H1 (cell line): ENCODE measurements at regions of chr3 and their contacts with region 1.

Region 1: DNA sequence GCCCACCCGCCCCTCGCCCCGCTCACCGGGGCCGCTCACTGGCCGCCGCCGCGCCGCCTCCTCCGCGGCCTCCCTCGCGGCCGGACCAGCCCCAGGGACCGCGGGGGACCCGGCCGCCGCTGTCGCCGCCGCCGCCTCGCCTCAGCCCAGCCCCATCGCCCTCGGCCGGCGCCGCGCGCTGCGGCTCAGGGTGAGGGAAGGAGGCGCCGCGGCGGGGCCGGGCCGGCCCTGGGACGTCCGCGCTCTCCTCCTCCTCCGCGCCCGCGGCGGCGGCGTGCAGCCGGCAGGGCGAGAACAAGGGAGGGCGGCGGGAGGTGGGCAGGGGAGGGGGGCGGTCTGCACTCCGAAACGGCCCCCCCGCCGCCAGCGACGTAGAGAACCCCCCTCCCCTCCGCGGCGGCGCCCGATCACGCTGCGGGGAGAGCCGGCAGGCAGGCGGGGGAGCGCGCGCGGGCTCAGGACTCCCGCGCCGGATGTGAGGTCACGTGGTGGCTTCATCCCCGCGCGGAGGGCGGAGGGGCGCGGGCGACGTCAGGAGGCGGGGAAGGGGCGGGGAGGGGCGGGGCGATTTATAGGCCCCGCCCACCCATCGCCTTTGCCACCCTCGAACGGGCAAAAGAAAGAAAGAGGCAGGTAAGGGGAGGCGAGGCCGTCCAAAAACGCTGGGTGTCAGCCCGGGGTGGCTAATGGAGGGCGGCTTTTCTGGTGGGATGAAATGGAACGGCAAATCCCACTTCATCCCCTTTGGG is at the start of gene ATP13A3:
- DNase-seq: peak; percentile 70 to 79
- H3K4me3 ChIP-seq: peak within 1 kb of the TSS; percentile 75 to 92 (median 84)
- H3K27ac ChIP-seq: no peak within 1 kb of the TSS; the same call in 1 of the 2 replicates
- H3K4me1 ChIP-seq: peaks cover 0 to 2% (median 0%) of the 10 kb centered on the region in 4 experiments; a peak in 2 of 7 replicates
- H3K27me3 ChIP-seq: peaks cover 0 to 6% (median 4%) of the 10 kb centered on the region in 4 experiments; a peak in 1 of 7 replicates
- CTCF ChIP-seq: no peak
- EP300 ChIP-seq: no peak
- POLR2A ChIP-seq: peak; percentile 86 to 88
- RAD21 ChIP-seq: no peak
- total RNA-seq, gene ATP13A3: 84.2 and 92.2 TPM in 2 replicates

Region 2: DNA sequence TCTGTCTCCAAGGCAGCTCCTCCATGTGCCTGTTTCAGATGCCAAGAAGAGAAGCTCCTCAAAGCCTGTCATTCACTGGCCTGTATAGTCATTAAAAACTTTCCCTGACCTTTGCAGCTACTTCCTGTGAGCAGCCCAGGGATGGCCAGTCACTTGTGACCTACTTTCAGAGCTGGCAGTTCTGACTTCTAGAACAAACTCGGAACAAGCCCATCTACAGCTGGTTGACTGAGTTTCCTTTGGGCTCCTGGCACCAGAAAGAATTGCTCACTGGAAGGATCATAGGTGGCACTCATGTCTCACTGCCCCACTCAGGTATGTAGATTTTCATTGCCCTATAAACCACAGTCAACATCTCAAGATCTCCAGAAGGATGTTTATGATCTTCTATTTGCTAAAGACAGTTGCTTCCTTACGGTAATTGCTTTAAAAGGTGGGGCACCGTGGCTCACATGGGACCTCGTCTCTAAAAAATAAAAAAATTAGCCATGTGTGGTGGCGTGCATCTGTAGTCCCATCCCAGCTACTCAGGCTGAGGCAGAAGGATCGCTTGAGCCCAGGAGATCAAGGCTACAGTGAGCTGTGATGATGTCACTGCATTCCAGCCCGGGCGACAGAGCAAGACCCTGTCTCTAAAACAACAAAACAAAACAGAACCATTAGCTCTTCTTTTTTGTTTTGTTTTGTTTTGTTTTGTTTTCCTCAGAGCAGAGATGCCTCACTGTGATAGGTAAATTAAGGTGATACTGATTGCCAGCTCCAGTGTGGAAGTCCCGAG is 11.3 kb after region 1 on chr3:
- CTCF ChIA-PET with region 1: interaction called, 4 read pairs
- POLR2A ChIA-PET with region 1: interaction called, 11 read pairs
- DNase-seq: no peak
- H3K4me3 ChIP-seq: no peak overlapping the region
- H3K27ac ChIP-seq: no peak overlapping the region
- H3K4me1 ChIP-seq: no peaks in the 10 kb centered on the region
- H3K27me3 ChIP-seq: no peaks in the 10 kb centered on the region
- CTCF ChIP-seq: no peak
- EP300 ChIP-seq: no peak
- POLR2A ChIP-seq: no peak
- RAD21 ChIP-seq: no peak

Region 3: GRCh38 chr3:194536871-194537637 is 50.3 kb after region 1 on chr3:
- CTCF ChIA-PET with region 1: no interaction called
- POLR2A ChIA-PET with region 1: no interaction called
- DNase-seq: no peak
- H3K4me3 ChIP-seq: no peak overlapping the region
- H3K27ac ChIP-seq: no peak overlapping the region
- H3K4me1 ChIP-seq: no peaks in the 10 kb centered on the region
- H3K27me3 ChIP-seq: no peaks in the 10 kb centered on the region
- CTCF ChIP-seq: no peak
- EP300 ChIP-seq: no peak
- POLR2A ChIP-seq: no peak
- RAD21 ChIP-seq: no peak